Ascending aorta (tissue), 2 donors: ENCODE measurements at regions of chr12 and their contacts with region 1.

Region 1: GRCh38 chr12:54191550-54192022 is 2.8 kb upstream of the SMUG1 start:
- DNase-seq: peak in 1 of 2 donors; percentile 88
- H3K4me3 ChIP-seq: no peak overlapping the region
- H3K27ac ChIP-seq: no peak overlapping the region
- H3K4me1 ChIP-seq: peaks cover 0 to 7% of the 10 kb centered on the region in 2 donors
- H3K27me3 ChIP-seq: no peaks in the 10 kb centered on the region
- CTCF ChIP-seq: peak; percentile 58 to 78 (median 66)

Region 2: DNA sequence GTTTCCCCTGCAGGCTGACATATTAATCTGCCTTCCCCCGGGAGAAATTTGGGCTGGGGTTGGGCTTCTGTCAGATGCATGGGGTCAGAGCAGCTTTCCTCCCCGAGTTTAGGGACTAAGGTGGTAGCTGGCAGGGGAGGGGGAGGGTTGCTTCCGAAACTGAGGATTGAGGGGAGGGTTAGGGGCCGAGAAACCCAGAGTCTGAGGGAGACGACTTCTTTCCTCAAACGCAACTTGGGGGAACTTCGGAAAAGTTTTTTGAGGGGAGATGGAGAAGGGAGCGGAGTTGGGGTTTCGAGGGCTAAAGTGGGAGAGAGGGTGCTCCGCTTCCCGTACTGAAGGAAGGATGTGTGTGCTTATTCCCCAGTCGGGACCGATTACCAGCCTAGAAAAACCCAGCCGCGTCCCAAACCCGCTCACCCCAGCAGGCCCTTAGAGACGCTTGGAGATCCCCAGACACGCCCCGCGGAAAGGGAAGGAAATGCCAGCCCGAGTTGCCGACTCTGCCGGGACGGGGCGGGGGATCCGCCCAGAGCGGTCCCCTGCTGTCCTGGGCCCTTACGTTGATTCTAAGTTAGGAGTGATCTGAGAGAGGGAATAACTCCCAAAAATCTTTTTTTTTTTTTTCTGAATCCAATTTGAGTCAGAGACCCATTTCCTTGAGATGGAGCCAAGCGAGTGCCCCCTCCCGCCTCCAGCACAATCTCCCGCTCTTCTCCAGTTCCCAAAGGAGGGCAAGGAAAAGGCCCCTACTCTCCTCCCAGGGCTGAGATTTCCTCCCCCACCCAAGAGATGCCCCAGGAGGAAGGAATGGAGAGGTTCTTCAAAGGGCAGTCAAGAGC is 64.7 kb before region 1 on chr12:
- intact Hi-C with region 1: loop called (anchors 5 kb)
- DNase-seq: peak in 1 of 2 donors; percentile 92
- H3K4me3 ChIP-seq: peak overlapping the region; percentile 83 to 94
- H3K27ac ChIP-seq: peak overlapping the region; percentile 71 to 92
- H3K4me1 ChIP-seq: peaks cover 8 to 10% of the 10 kb centered on the region in 2 donors
- H3K27me3 ChIP-seq: no peaks in the 10 kb centered on the region
- CTCF ChIP-seq: no peak

Region 3: GRCh38 chr12:54140588-54141388 is 50.8 kb before region 1 on chr12:
- intact Hi-C with region 1: loop called (anchors 2 kb)
- DNase-seq: peak in 1 of 2 donors; percentile 87
- H3K4me3 ChIP-seq: peak overlapping the region in 1 of 2 donors; percentile 27
- H3K27ac ChIP-seq: peak overlapping the region; percentile 82 to 88
- H3K4me1 ChIP-seq: peaks cover 4 to 19% of the 10 kb centered on the region in 2 donors
- H3K27me3 ChIP-seq: no peaks in the 10 kb centered on the region
- CTCF ChIP-seq: no peak

Region 4: DNA sequence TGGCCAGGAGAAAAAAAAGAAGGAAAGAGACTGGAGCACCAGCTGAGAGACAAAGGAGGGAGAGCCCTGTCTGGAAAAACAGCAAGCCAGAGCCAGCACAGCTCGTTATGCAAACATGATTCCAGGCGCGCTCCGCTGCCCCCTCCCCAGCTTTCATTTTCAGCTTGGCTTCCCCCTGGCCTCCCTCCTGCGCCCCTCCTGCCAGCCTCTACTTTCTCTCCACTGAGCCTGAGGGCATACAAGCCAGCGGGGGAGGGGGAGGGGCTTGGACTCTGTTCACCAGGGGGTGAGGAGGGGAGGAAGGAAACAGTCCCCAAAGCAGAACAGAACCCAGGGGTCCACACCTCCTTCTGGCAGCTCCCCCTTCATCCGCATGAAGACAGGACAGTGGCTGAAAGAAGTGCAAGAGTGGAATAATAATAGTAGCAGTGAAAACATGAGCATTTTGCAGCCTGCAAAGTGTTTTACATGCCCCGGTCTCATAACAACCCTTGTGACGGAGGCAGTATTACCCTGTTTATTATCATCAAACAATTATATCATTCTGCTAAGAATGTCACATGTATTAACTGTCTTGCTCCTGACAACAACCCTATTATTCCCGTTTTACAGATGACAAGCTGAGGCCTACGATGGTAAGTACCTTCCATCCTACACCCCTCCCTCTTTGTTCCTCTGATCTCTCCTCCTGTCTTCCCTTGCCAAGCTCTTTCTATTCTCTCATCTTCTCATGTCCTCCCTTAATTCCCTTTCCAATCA is 27.0 kb before region 1 on chr12:
- intact Hi-C with region 1: no loop called
- DNase-seq: no peak
- H3K4me3 ChIP-seq: no peak overlapping the region
- H3K27ac ChIP-seq: no peak overlapping the region
- H3K4me1 ChIP-seq: no peaks in the 10 kb centered on the region
- H3K27me3 ChIP-seq: no peaks in the 10 kb centered on the region
- CTCF ChIP-seq: no peak